ENCODE measurements at regions of chr18 and their contacts with region 1.

Region 1: GRCh38 chr18:36809590-36810381 is 19.0 kb downstream of the TPGS2 start:
- DNase-seq: peak; percentile 79 to 82 (median 82)
- ATAC-seq: peak; percentile 91
- H3K4me3 ChIP-seq: no peak overlapping the region
- H3K27ac ChIP-seq: no peak overlapping the region
- H3K4me1 ChIP-seq: peaks cover 0 to 18% of the 10 kb centered on the region in 2 experiments; a peak in 2 of 5 replicates
- H3K27me3 ChIP-seq: no peaks in the 10 kb centered on the region
- CTCF ChIP-seq: peak; percentile 77 to 86 (median 83)
- EP300 ChIP-seq: no peak
- POLR2A ChIP-seq: no peak
- RAD21 ChIP-seq: peak; percentile 37 to 61

Region 2: DNA sequence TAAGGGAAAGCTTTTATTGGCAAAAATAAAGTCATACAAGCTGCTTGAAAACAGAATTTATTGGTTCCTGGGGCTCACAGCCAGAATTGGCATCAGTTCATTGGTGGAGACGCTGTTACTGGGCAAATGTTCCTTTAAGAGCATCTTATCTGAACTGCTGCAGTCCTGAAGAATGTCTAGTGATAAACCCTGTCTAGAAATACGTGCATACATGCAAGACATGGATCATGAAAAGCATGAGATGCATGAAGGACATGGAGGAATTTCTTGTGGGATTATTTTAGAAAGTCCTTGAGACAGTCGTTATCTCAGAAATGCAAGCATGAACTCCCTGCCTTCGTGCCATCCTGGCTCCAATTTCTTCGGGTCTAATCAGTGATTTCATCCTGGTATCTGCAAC is 544.8 kb before region 1 on chr18:
- CTCF ChIA-PET with region 1: no interaction called
- POLR2A ChIA-PET with region 1: no interaction called
- in situ Hi-C with region 1: no loop called
- intact Hi-C with region 1: no loop called
- DNase-seq: peak in 2 of 4 experiments; percentile 22 to 52
- ATAC-seq: peak; percentile 70
- H3K4me3 ChIP-seq: no peak overlapping the region
- H3K27ac ChIP-seq: no peak overlapping the region
- H3K4me1 ChIP-seq: peaks cover 4 to 9% of the 10 kb centered on the region in 2 experiments; a peak in 4 of 5 replicates
- H3K27me3 ChIP-seq: no peaks in the 10 kb centered on the region
- CTCF ChIP-seq: no peak
- EP300 ChIP-seq: no peak; the same call in 1 of the 2 replicates
- POLR2A ChIP-seq: no peak
- RAD21 ChIP-seq: no peak

Region 3: DNA sequence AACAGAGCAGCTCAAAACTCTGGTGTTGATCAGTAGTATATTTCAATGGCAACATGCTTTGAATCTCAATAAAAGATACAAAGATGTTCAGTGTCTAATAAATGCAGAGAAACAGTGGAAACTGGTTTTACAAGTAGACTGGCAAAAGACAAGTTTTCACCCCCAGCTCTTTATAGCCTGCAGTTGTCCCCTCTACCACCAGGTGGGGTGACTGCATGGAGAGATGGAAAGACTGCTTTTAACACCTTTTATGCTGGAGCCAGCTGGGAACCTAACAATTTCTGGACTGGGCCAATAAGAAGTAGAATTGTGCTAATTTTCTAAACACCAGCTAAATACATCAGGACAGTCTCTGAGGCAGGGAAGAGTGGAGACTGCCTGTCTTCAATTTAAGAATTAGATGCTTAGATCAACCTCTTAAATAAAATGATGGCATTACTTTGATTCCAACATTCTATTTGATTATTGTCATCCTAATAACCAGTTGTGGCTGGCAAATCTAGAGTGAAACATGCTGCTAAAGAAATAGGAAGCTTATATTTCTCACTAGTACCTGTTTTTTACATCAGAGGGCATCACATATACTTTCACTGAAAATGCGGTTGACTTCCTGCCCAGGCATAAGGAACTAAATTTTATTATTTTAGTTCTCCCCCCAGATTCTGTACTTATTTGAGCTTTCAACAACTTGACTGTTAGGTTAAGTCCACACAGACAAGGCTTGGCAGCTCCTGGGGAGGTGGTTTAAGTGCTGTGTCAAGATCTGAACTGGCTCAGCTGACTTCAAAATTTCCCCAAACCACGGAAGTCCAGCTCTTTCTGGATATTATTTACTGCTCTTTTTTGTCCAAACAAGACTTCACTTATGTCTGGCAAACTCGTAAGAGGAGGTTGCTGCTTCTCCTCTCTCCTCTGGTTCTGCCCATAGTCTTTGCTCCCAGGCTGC is 121.5 kb before region 1 on chr18:
- CTCF ChIA-PET with region 1: interaction called, 14 read pairs
- POLR2A ChIA-PET with region 1: no interaction called
- in situ Hi-C with region 1: no loop called
- intact Hi-C with region 1: loop called (anchors 1 kb)
- DNase-seq: peak; percentile 74 to 79 (median 78)
- ATAC-seq: peak; percentile 93
- H3K4me3 ChIP-seq: no peak overlapping the region
- H3K27ac ChIP-seq: no peak overlapping the region
- H3K4me1 ChIP-seq: no peaks in the 10 kb centered on the region
- H3K27me3 ChIP-seq: peaks cover 0 to 11% of the 10 kb centered on the region in 2 experiments; a peak in 3 of 5 replicates
- CTCF ChIP-seq: peak; percentile 82 to 91 (median 83)
- EP300 ChIP-seq: no peak
- POLR2A ChIP-seq: no peak
- RAD21 ChIP-seq: peak; percentile 57 to 83

Region 4: DNA sequence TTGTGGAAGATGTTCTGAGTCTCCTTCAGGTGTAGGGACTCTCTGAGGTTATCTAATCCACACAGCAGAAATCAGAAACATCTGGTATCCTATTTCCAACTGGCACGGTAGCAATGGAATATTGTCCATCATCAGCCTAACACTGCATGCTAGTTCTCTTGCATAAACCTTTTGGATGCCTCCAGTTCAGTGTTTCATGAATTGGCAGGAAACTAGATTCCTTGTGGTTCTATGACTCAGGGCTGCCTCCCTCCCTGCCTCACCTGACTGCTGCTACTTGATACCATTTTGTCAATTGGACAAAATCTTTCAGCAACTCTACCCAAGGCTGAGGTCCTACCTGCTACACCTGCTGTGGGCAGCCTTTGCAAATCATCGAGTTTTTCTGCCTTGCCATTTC is 111.9 kb before region 1 on chr18:
- CTCF ChIA-PET with region 1: no interaction called
- POLR2A ChIA-PET with region 1: no interaction called
- in situ Hi-C with region 1: no loop called
- intact Hi-C with region 1: loop called (anchors 5 kb)
- DNase-seq: no peak
- ATAC-seq: no peak
- H3K4me3 ChIP-seq: no peak overlapping the region
- H3K27ac ChIP-seq: no peak overlapping the region
- H3K4me1 ChIP-seq: no peaks in the 10 kb centered on the region
- H3K27me3 ChIP-seq: peaks cover 10 to 25% of the 10 kb centered on the region in 2 experiments; a peak in 4 of 5 replicates
- CTCF ChIP-seq: no peak
- EP300 ChIP-seq: no peak
- POLR2A ChIP-seq: no peak
- RAD21 ChIP-seq: no peak

Region 5: GRCh38 chr18:36769611-36770314 is 40.0 kb before region 1 on chr18:
- CTCF ChIA-PET with region 1: interaction called, 8 read pairs
- POLR2A ChIA-PET with region 1: no interaction called
- in situ Hi-C with region 1: no loop called
- intact Hi-C with region 1: loop called (anchors 5 kb)
- DNase-seq: peak; percentile 58 to 74 (median 66)
- ATAC-seq: peak; percentile 93
- H3K4me3 ChIP-seq: no peak overlapping the region
- H3K27ac ChIP-seq: no peak overlapping the region
- H3K4me1 ChIP-seq: no peaks in the 10 kb centered on the region
- H3K27me3 ChIP-seq: peaks cover 19 to 21% of the 10 kb centered on the region in 2 experiments; a peak in 4 of 5 replicates
- CTCF ChIP-seq: peak; percentile 78 to 89 (median 81)
- EP300 ChIP-seq: no peak
- POLR2A ChIP-seq: no peak
- RAD21 ChIP-seq: peak in 1 of 2 experiments; percentile 65; a peak in 2 of 4 replicates

Region 6: DNA sequence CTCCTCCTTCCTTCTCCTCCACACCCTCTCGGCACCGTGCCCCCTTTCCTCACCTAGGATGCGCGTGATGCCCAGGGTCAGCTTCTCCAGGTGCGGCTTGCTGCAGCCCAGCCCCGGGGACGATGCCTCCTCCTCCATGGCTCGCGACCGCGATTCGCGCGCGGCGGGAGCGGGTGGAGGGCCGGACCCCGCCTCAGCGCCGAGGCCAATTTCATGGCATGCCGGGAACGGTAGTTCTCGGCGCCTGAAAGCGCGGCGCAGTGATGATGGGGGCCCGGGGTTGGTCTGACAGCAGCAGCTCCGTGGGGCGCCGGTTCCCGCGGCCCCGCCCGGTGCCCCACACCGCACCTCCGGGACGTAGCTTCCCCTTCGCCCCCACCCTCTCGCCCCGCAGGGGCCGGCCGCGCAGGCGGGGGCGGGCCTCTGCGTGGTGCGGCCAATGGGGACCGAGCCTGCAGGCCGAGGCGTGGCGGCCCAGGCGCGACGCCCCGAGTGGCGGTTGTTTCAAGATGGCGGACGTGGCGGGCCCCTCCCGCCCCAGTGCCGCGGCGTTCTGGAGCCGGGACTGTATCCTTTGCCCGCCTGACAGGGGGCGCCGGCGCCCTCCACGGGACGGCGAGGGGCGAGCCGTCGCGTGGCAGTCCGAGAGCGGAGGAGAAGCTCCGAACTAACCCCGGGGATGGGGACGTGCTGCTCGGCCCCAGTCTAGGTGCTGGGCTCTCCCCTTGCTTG is 19.0 kb after region 1 on chr18 and contains the starts of genes KIAA1328 and TPGS2:
- CTCF ChIA-PET with region 1: no interaction called
- POLR2A ChIA-PET with region 1: interaction called, 19 read pairs
- in situ Hi-C with region 1: no loop called
- intact Hi-C with region 1: no loop called
- DNase-seq: peak; percentile 94 to 96 (median 96)
- ATAC-seq: peak; percentile 94
- H3K4me3 ChIP-seq: peak within 1 kb of the TSS; percentile 95
- H3K27ac ChIP-seq: peak within 1 kb of the TSS; percentile 87
- H3K4me1 ChIP-seq: peaks cover 3 to 24% of the 10 kb centered on the region in 2 experiments; a peak in 3 of 5 replicates
- H3K27me3 ChIP-seq: no peaks in the 10 kb centered on the region; a peak in 1 of 5 replicates
- CTCF ChIP-seq: peak; percentile 68 to 85 (median 85)
- EP300 ChIP-seq: no peak; the same call in 1 of the 2 replicates
- POLR2A ChIP-seq: peak; percentile 80
- RAD21 ChIP-seq: peak; percentile 62 to 74
- polyA plus RNA-seq, gene KIAA1328: 4.8 to 5.1 TPM
- polyA plus RNA-seq, gene TPGS2: 94.2 to 113 TPM